ENCODE measurements at regions of chr20 and their contacts with region 1.

Region 1: DNA sequence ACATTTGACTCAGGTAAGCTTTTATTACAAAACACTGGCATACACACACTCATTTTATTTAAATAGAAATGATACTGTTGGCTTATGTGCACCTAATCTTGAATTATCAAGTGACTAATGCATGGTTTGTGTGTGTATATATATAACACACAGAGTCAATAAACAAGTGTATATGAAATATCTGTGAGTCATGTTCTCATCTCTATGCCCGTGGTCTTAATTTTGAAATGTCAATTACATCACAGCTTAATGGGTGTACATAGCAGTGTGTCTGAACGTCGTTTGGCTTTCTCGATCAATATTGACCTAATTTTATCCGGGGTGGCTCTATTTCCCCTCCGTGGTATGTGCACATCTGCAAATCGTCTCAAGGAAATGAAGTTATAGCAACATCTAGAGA is 104.0 kb upstream of the ZFP64 start:
- DNase-seq: no peak
- ATAC-seq: no peak
- H3K4me3 ChIP-seq: no peak overlapping the region
- H3K4me3 Mint-ChIP-seq: no peak overlapping the region
- H3K27ac ChIP-seq: no peak overlapping the region
- H3K27ac Mint-ChIP-seq: no peak overlapping the region
- H3K4me1 ChIP-seq: no peaks in the 10 kb centered on the region
- H3K4me1 Mint-ChIP-seq: no peaks in the 10 kb centered on the region
- H3K27me3 ChIP-seq: peaks cover 2% of the 10 kb centered on the region in 2 experiments
- H3K27me3 Mint-ChIP-seq: no peaks in the 10 kb centered on the region

Region 2: GRCh38 chr20:52279706-52280105 is 15.8 kb before region 1 on chr20:
- CTCF ChIA-PET with region 1: no interaction called
- POLR2A ChIA-PET with region 1: interaction called, 5 to 10 read pairs
- DNase-seq: no peak
- ATAC-seq: no peak
- H3K4me3 ChIP-seq: no peak overlapping the region
- H3K4me3 Mint-ChIP-seq: no peak overlapping the region
- H3K27ac ChIP-seq: no peak overlapping the region
- H3K27ac Mint-ChIP-seq: no peak overlapping the region
- H3K4me1 ChIP-seq: no peaks in the 10 kb centered on the region
- H3K4me1 Mint-ChIP-seq: no peaks in the 10 kb centered on the region
- H3K27me3 ChIP-seq: peaks cover 0 to 12% of the 10 kb centered on the region in 2 experiments
- H3K27me3 Mint-ChIP-seq: peaks cover 15 to 19% of the 10 kb centered on the region in 2 donors

Region 3: DNA sequence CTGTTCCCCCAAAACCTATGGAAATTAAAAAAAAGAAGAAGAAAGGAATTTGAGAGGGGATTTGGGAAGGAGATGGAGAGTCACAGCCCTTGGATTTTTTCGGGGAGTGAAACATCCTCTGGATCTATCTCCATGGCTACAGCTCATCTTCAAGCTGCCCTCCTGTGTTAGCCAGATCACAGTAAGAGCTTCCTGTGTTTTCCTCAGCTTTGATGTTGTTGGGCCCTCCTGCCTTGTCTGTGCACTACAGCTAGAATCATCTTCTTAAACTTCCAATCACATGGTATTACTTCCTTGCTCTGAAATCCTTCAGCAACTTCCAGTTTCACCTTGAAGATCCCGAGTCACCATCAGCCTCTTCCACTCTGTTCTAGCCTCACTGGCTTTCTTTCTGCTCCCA is 103.8 kb after region 1 on chr20:
- CTCF ChIA-PET with region 1: no interaction called
- POLR2A ChIA-PET with region 1: no interaction called
- DNase-seq: peak in 1 of 35 experiments; percentile 30
- ATAC-seq: peak; percentile 57 to 87 (median 76)
- H3K4me3 ChIP-seq: no peak overlapping the region
- H3K4me3 Mint-ChIP-seq: peak overlapping the region in 1 of 3 donors; percentile 9
- H3K27ac ChIP-seq: no peak overlapping the region
- H3K27ac Mint-ChIP-seq: peak overlapping the region; percentile 78 to 85
- H3K4me1 ChIP-seq: peaks cover 7 to 26% of the 10 kb centered on the region in 2 experiments
- H3K4me1 Mint-ChIP-seq: peaks cover 44 to 49% (median 47%) of the 10 kb centered on the region in 3 donors
- H3K27me3 ChIP-seq: no peaks in the 10 kb centered on the region
- H3K27me3 Mint-ChIP-seq: no peaks in the 10 kb centered on the region

Region 4: DNA sequence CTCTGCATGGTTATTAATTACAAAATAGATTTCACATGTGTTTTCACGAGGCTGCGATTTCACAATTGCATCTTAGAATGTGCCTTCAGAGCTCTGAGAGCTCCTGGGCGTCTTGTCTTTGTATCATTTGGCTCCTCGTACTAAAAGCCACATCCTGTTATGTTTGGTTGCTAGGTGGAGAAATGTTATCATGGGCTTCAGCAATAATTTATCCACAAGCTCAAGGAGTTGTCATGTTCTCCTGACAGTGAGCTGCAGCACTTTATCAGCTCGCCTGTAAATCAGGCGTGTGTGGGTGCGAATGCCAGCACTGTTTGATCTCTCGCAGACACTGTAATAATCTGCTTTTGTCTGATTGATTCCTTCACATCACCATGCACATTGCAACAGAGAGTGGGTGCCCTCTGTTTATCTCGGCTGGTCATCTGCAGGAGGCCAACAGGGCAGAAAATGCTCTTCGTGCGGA is 114.7 kb after region 1 on chr20:
- CTCF ChIA-PET with region 1: interaction called in 1 of 2 experiments, 14 read pairs
- POLR2A ChIA-PET with region 1: no interaction called
- DNase-seq: peak; percentile 29 to 90 (median 63)
- ATAC-seq: peak; percentile 86 to 93 (median 92)
- H3K4me3 ChIP-seq: peak overlapping the region in 1 of 2 donors; percentile 3
- H3K4me3 Mint-ChIP-seq: peak overlapping the region; percentile 65 to 73 (median 71)
- H3K27ac ChIP-seq: peak overlapping the region; percentile 96
- H3K27ac Mint-ChIP-seq: peak overlapping the region; percentile 99
- H3K4me1 ChIP-seq: peaks cover 30 to 58% of the 10 kb centered on the region in 2 experiments
- H3K4me1 Mint-ChIP-seq: peaks cover 66 to 85% (median 80%) of the 10 kb centered on the region in 3 donors
- H3K27me3 ChIP-seq: no peaks in the 10 kb centered on the region
- H3K27me3 Mint-ChIP-seq: no peaks in the 10 kb centered on the region

Measured in T-cell (primary cell).